ENCODE measurements at regions of chr10 and their contacts with region 1.

Region 1: GRCh38 chr10:50396491-50397311 is 145.4 kb upstream of the ASAH2 start:
- DNase-seq: peak in 1 of 3 donors; percentile 31
- H3K4me3 ChIP-seq: no peak overlapping the region
- H3K27ac ChIP-seq: no peak overlapping the region
- H3K4me1 ChIP-seq: peaks cover 0 to 14% (median 4%) of the 10 kb centered on the region in 4 experiments
- H3K27me3 ChIP-seq: no peaks in the 10 kb centered on the region

Region 2: DNA sequence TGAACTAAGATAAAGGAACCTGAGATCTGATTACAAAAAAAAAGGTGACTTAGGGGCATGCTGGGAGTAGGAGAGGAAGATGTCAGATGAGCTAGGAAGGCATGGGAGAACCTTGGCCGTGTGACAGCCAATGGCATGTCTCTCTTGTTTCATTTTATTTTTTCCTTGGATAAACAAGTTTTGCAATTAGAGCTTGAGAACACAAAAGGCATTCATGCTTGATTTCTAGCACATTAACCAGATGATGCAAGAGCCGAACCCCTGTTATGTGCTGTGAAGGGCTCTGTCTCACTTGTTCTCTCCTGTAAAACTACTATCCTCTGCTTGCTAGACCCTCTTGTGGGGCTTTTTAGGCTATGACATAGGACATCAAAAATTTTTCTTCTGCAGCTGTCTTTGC is 11.1 kb before region 1 on chr10:
- CTCF ChIA-PET with region 1: interaction called, 15 read pairs
- POLR2A ChIA-PET with region 1: interaction called, 6 read pairs
- DNase-seq: no peak
- H3K4me3 ChIP-seq: no peak overlapping the region
- H3K27ac ChIP-seq: no peak overlapping the region
- H3K4me1 ChIP-seq: peaks cover 0 to 7% (median 6%) of the 10 kb centered on the region in 4 experiments
- H3K27me3 ChIP-seq: no peaks in the 10 kb centered on the region